K562 (cell line): ENCODE measurements at regions of chr11 and their contacts with region 1.

Region 1: DNA sequence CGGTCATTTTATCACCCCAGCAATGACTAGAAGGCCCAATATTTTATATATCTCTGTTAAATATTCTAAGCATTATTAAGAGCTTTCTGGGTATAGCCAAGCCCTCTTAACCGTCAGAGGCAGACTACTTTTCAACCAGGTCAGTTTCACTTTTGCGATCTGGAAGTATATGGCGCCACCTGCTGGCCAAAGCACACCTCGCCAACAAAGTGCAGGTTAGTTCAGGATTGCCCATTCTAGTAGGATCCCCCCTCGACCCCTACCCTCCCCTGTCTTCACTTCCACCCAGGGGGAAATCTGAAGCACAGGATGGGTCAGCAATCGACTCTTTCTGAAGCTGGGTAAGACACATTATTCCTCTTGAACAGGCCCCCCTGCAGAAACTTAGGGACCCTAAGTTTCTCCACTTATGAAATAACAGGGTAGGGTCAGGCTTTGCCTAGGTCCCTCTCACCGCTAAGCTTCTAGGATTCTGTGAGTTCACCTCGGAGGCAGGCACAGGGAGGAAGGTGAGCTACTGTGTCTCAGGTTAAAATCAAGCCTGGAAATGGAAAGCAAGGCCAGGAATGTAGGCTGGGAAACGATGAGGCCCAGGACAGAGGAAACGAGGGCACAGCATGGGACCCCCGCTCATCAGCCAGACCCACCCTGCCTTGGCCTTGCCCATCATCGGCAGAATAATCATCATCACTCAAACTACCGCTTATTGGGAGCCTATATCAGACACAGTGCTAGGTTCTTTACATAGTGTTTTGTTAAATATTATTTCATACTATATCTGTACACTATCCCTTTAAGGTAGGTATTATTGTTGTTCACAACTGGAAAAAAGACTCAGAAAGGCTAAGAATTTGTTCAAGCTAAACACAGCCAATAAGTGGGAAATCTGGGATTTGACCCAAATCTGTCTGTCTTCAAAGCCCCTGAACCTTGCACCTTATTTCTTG is 35.6 kb downstream of the KCNJ1 start:
- DNase-seq: peak; percentile 62 to 76 (median 71)
- ATAC-seq: peak; percentile 98
- H3K4me3 ChIP-seq: no peak overlapping the region
- H3K27ac ChIP-seq: no peak overlapping the region
- H3K4me1 ChIP-seq: no peaks in the 10 kb centered on the region
- H3K27me3 ChIP-seq: no peaks in the 10 kb centered on the region
- CTCF ChIP-seq: peak; percentile 70 to 84 (median 80)
- EP300 ChIP-seq: no peak
- POLR2A ChIP-seq: no peak
- RAD21 ChIP-seq: peak; percentile 76 to 80

Region 2: DNA sequence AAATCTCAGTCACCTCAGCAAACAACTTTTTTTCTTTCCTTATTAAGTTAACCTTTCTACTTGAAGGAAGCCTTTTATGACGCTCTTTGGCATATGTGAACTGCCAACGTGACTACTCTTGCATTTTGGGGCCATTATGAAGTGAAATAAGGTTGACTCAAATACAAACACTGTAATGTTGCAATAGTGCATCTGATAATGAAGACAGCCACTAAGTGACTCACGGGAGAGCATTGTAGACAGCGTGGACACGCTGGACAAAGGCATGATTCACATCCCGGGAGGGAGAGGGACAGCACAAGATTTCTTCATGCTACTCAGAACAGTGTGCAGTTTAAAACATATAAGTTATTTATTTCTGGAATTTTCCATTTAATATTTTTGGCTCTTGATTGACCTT is 804.9 kb before region 1 on chr11:
- CTCF ChIA-PET with region 1: no interaction called
- POLR2A ChIA-PET with region 1: no interaction called
- in situ Hi-C with region 1: loop called (anchors 25 kb)
- intact Hi-C with region 1: loop called (anchors 1 kb)
- DNase-seq: no peak
- ATAC-seq: no peak
- H3K4me3 ChIP-seq: no peak overlapping the region
- H3K27ac ChIP-seq: no peak overlapping the region
- H3K4me1 ChIP-seq: no peaks in the 10 kb centered on the region
- H3K27me3 ChIP-seq: no peaks in the 10 kb centered on the region
- CTCF ChIP-seq: no peak
- EP300 ChIP-seq: no peak
- POLR2A ChIP-seq: no peak
- RAD21 ChIP-seq: no peak

Region 3: DNA sequence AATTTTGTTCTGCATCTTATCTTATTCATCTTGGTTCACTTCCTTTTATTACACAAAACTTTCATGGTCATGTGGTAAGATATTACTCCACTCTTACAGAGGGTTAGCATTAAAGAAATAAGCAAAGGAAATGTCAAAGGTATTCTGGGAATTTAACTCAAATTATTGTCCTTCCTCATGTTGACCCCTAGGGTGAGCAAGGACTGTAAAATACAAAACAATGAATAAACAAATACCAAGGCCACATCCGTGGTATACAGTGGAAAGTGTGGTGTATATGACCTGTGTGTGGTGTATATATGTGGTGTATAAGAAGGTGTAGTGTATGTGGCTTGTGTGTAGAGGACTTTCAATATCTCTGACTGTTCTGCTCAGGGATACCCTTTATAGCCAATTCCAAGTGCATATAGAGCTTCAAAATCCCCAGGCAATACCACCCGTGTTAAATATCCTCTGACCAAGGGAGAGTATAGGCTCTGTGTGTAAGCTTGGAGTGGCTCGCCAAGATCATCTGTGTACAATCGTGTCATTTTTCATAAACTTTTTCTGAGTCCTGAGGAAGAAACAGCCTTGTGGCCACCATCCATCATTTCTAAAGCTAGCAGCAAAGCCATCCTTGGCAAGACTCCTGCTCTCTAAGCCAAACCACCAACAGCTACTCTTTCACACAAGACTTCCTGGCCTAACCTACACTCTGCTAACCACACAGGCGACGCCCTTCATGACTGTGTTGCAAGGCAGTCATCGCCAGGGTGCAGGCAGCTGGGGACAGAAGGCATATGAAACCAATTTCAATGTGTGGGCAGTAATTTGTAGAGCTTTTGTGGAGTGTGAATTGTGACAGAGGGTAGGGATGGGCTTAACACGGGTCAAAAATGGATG is 792.1 kb before region 1 on chr11:
- CTCF ChIA-PET with region 1: no interaction called
- POLR2A ChIA-PET with region 1: no interaction called
- in situ Hi-C with region 1: loop called (anchors 25 kb)
- intact Hi-C with region 1: no loop called
- DNase-seq: no peak
- ATAC-seq: no peak
- H3K4me3 ChIP-seq: no peak overlapping the region
- H3K27ac ChIP-seq: no peak overlapping the region
- H3K4me1 ChIP-seq: no peaks in the 10 kb centered on the region
- H3K27me3 ChIP-seq: no peaks in the 10 kb centered on the region
- CTCF ChIP-seq: no peak
- EP300 ChIP-seq: no peak
- POLR2A ChIP-seq: no peak
- RAD21 ChIP-seq: no peak

Region 4: DNA sequence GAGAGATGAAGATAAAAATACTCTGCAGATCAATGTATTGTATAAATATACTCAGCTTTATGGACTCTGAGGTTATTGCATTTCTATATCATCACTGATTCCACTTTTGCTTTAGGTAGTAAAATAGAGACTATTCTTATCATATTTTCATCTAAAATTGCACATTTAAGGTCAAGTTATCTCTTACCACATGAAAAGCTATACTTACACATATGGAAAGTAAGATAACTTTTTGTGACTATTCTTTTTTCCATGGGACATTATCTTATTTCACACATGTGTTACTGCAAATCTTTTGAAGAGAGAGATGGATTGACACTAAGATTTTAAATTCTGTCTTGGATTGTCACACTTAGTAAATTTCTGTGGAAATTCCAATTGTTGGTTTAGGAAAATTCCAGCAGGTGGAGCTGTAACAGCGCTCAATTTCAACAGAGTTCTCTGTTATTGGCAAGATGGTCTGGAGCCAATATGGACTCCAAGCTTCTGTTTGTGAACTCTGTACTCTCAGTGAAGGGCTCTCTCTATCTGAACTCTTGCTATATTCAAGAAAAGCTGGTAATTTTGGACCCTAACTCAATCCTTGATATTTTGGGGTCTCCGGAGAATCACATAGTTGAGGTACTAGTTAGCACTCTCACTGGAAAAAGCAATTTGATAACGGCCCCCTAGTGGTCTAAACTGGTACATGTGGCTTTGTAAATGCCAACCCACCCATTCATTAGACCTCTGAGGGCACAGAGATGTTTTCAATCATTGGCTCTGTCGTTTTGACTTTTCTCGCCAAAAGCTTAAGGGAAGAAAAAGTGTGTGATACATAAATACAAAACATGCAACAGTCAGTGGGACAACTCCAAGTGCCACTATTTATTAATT is 673.8 kb before region 1 on chr11:
- CTCF ChIA-PET with region 1: no interaction called
- POLR2A ChIA-PET with region 1: no interaction called
- in situ Hi-C with region 1: no loop called
- intact Hi-C with region 1: loop called (anchors 1 kb)
- DNase-seq: peak; percentile 22 to 60 (median 54)
- ATAC-seq: peak; percentile 69; the same call in 2 of the 3 replicates
- H3K4me3 ChIP-seq: no peak overlapping the region
- H3K27ac ChIP-seq: no peak overlapping the region
- H3K4me1 ChIP-seq: no peaks in the 10 kb centered on the region
- H3K27me3 ChIP-seq: no peaks in the 10 kb centered on the region
- CTCF ChIP-seq: peak; percentile 46 to 62 (median 61); a peak in 5 of 6 replicates
- EP300 ChIP-seq: no peak
- POLR2A ChIP-seq: no peak
- RAD21 ChIP-seq: peak; percentile 51 to 65

Region 5: DNA sequence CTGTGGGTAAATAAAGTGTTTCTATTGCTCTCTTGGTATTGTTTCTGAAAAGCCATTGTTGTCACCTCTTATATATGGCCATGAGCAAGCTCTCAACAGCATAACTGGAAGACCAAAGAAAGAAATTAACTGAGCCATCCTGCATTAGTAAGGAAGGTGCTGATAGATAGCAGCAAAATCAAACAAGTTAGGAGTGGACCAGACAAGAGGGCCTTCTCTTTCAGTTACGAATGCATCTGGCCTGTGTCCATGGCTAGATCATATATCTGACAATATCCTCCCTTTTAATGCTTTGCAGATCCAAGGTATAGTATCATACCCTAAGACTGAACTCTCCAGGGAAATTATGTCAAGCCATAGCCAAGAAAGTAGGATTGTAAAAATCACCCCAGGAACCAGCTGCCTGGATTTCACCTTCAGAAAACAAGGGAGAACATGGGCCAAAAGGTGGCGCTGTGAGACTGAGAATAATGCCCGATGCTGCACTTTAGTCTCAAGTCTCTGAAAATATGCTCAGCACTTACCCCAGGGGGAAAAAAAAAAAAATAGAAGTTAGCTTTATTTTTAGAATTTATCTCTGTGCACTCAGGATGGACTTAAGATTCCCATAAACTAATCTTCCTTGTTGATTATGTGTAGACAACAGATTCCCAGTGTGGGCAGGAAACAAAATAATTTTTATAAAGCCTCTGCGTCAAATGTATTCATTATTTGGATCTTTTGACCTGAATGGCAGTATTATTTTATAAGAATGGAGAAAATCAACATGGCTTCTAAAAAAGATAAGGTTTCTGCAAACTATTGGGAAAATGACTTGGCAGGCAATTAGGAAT is 659.2 kb before region 1 on chr11:
- CTCF ChIA-PET with region 1: interaction called, 3 read pairs
- POLR2A ChIA-PET with region 1: no interaction called
- in situ Hi-C with region 1: loop called (anchors 10 kb)
- intact Hi-C with region 1: no loop called
- DNase-seq: peak; percentile 14 to 73 (median 30)
- ATAC-seq: peak; percentile 88
- H3K4me3 ChIP-seq: no peak overlapping the region
- H3K27ac ChIP-seq: no peak overlapping the region
- H3K4me1 ChIP-seq: no peaks in the 10 kb centered on the region
- H3K27me3 ChIP-seq: no peaks in the 10 kb centered on the region
- CTCF ChIP-seq: peak; percentile 65 to 81 (median 66)
- EP300 ChIP-seq: no peak
- POLR2A ChIP-seq: no peak
- RAD21 ChIP-seq: peak; percentile 75 to 76

Region 6: DNA sequence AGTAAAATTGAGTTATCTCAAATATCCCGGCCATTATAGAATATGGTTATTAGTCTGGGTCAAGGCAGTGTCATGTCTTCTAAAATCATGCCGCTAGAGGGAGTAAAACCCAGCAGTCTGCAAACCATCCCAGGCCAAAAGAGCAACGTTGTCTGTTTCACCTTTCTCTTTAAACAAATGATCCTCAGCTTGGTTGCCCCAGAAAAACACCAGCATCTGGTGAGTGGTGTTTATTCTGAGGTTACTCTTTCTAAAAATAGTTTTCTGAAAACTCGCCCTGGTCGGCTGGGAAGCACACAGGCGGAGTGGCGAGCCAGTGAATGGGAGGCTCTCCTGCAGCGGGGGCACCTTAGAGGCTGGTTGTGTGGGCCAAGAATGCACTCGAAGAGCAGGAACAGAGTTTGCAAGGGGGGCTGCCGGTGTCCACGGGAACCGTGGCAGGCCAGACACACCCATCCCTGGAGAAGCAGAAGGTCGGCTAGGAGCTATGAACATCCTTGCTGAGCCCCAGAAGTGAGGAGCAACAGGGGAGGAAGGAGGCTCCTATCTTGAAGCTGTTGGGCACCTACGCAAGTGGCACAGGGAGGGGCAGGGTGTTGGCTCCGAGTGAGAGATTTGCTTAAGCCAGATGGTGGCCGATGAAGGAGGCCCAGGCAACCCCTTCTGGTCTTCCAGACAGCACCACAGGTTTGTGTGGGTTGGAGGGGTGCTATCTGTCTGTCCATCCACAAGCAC is 541.2 kb before region 1 on chr11:
- CTCF ChIA-PET with region 1: no interaction called
- POLR2A ChIA-PET with region 1: no interaction called
- in situ Hi-C with region 1: no loop called
- intact Hi-C with region 1: loop called (anchors 2 kb)
- DNase-seq: peak; percentile 35 to 48 (median 47)
- ATAC-seq: peak; percentile 81
- H3K4me3 ChIP-seq: no peak overlapping the region
- H3K27ac ChIP-seq: no peak overlapping the region
- H3K4me1 ChIP-seq: no peaks in the 10 kb centered on the region
- H3K27me3 ChIP-seq: no peaks in the 10 kb centered on the region
- CTCF ChIP-seq: peak; percentile 34 to 62 (median 54); a peak in 4 of 6 replicates
- EP300 ChIP-seq: no peak
- POLR2A ChIP-seq: no peak
- RAD21 ChIP-seq: peak; percentile 81 to 86